Left cardiac atrium (tissue), 4 donors: ENCODE measurements at regions of chr5 and their contacts with region 1.

Region 1: GRCh38 chr5:154610321-154611154 is 132.5 kb upstream of the HAND1 start:
- DNase-seq: peak; percentile 80
- ATAC-seq: peak; percentile 92 to 93

Region 2: GRCh38 chr5:154467655-154468354 is 142.7 kb before region 1 on chr5:
- intact Hi-C with region 1: loop called (anchors 1 to 5 kb)
- DNase-seq: peak; percentile 82
- ATAC-seq: peak; percentile 93

Region 3: GRCh38 chr5:154520861-154521453 is 89.6 kb before region 1 on chr5:
- intact Hi-C with region 1: loop called in 1 of 2 experiments (anchors 5 kb)
- DNase-seq: no peak
- ATAC-seq: peak in 1 of 2 donors; percentile 27